ENCODE measurements at regions of chr2 and their contacts with region 1.

Region 1: DNA sequence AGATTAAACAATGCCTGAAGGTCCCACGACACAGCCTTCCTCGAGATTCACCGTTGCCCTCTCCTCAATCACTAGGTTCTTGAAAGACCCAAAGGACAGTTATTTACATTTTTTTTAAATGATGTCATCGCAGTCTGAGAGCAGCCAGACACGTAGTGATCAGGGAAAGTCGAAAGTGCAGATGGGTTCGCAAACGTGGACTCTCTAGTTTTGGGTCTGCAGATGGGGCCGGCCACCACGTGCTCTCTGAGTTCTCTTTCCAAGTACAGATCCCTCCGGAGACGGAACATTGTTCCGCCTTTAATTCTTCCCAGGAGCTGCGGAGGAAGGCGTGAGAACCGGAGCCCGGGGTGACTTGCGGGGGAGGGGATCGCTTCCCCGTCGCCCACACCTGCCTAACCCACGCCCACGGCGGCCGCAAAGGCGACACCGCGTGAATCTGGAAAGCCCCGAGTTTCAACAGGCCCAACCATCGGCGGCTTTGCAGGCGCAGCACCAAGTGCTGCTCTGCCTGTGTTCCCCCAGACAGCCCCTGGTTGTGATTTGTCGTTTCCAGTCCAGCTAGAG is 54.3 kb downstream of the PKDCC start:
- DNase-seq: peak in 29 of 42 donors; percentile 19 to 64 (median 40)

Region 2: GRCh38 chr2:42169100-42169873 is 67.2 kb after region 1 on chr2 and contains the start of gene EML4:
- intact Hi-C with region 1: loop called (anchors 5 kb)
- DNase-seq: peak; percentile 78 to 97 (median 93)

Measured in head of caudate nucleus (tissue), 42 donors.